Activated CD4-positive, alpha-beta memory T cell treated with anti-CD3 and anti-CD28 coated beads for 36 hours (primary cell): ENCODE measurements at regions of chr10 and their contacts with region 1.

Region 1: GRCh38 chr10:102245101-102245931 is at the start of gene GBF1:
- DNase-seq: peak; percentile 95
- H3K4me3 Mint-ChIP-seq: peak within 1 kb of the TSS; percentile 100
- H3K27ac Mint-ChIP-seq: peak within 1 kb of the TSS; percentile 95
- H3K4me1 Mint-ChIP-seq: peaks cover 51% of the 10 kb centered on the region
- H3K27me3 Mint-ChIP-seq: peaks cover 15% of the 10 kb centered on the region
- total RNA-seq, gene GBF1: 42.2 to 44.0 TPM

Region 2: GRCh38 chr10:102120142-102120990 is 125.0 kb before region 1 on chr10 and contains the start of gene LDB1:
- CTCF ChIA-PET with region 1: no interaction called
- POLR2A ChIA-PET with region 1: no interaction called
- intact Hi-C with region 1: loop called (anchors 1 kb)
- DNase-seq: peak; percentile 74
- H3K4me3 Mint-ChIP-seq: peak within 1 kb of the TSS; percentile 92
- H3K27ac Mint-ChIP-seq: peak within 1 kb of the TSS; percentile 96
- H3K4me1 Mint-ChIP-seq: peaks cover 49% of the 10 kb centered on the region
- H3K27me3 Mint-ChIP-seq: no peaks in the 10 kb centered on the region
- total RNA-seq, gene LDB1: 48.1 to 48.8 TPM

Region 3: DNA sequence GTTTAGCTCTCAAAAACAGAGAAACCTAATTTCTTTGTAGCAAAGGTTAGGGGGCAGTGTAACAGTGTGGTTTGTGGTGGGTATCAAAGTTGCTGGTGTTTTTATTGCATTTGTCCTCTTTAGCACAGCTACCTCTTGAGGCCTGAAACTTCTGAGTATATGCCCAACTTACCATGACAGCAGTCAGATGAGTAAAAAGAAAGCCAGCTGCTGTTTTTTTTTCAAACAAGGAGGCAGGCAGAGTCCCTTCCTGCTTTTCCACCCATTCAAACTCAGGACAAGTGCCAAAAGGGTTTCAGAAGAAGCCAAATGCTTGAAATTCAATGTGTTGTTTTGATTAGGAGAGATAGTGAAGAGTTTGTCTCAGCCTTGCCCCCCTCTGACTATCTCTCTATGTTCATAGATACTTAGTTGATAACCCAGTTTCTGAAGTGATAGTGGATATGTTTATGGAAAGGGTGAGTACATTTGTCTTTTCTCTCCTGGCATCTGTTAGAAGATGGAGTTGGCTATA is 23.1 kb after region 1 on chr10:
- CTCF ChIA-PET with region 1: interaction called, 5 read pairs
- POLR2A ChIA-PET with region 1: interaction called, 16 read pairs
- intact Hi-C with region 1: loop called (anchors 1 kb)
- DNase-seq: no peak
- H3K4me3 Mint-ChIP-seq: peak overlapping the region; percentile 41
- H3K27ac Mint-ChIP-seq: peak overlapping the region; percentile 97
- H3K4me1 Mint-ChIP-seq: peaks cover 73% of the 10 kb centered on the region
- H3K27me3 Mint-ChIP-seq: no peaks in the 10 kb centered on the region

Region 4: DNA sequence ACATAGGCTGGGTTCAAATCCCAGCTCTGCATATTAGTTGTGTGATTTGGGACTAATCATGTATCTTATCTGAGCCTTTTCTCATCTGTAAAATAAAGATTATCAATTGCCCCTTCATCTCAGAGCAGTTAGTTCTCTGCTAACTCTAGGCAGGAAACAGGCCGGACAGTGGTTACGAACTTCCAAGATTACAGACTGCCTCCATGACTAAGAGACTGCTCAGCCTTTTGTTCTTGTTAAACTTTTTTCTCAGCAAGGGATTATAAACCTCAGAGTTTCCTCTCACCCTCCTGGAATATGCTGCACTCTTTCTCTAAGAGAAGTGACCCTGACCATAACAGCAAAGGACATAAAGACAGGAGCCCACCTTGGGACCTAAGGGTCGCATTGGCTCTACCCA is 97.6 kb after region 1 on chr10:
- CTCF ChIA-PET with region 1: interaction called, 1,053 read pairs
- POLR2A ChIA-PET with region 1: interaction called, 3 read pairs
- intact Hi-C with region 1: loop called (anchors 1 kb)
- DNase-seq: no peak
- H3K4me3 Mint-ChIP-seq: no peak overlapping the region
- H3K27ac Mint-ChIP-seq: peak overlapping the region; percentile 60
- H3K4me1 Mint-ChIP-seq: peaks cover 39% of the 10 kb centered on the region
- H3K27me3 Mint-ChIP-seq: no peaks in the 10 kb centered on the region

Region 5: GRCh38 chr10:102420810-102421644 is 175.7 kb after region 1 on chr10 and contains the start of gene FBXL15:
- CTCF ChIA-PET with region 1: no interaction called
- POLR2A ChIA-PET with region 1: no interaction called
- intact Hi-C with region 1: loop called (anchors 1 kb)
- DNase-seq: peak; percentile 98
- H3K4me3 Mint-ChIP-seq: peak within 1 kb of the TSS; percentile 94
- H3K27ac Mint-ChIP-seq: peak within 1 kb of the TSS; percentile 92
- H3K4me1 Mint-ChIP-seq: peaks cover 35% of the 10 kb centered on the region
- H3K27me3 Mint-ChIP-seq: peaks cover 20% of the 10 kb centered on the region
- total RNA-seq, gene FBXL15: 10.8 to 11.4 TPM